Psoas muscle (tissue), 8 donors: ENCODE measurements at regions of chr10 and their contacts with region 1.

Region 1: GRCh38 chr10:71278691-71279588 is 40.1 kb upstream of the SLC29A3 start:
- DNase-seq: no peak
- ATAC-seq: no peak
- H3K4me3 ChIP-seq: no peak overlapping the region
- H3K27ac ChIP-seq: no peak overlapping the region
- H3K4me1 ChIP-seq: peaks cover 7% of the 10 kb centered on the region
- H3K27me3 ChIP-seq: no peaks in the 10 kb centered on the region
- CTCF ChIP-seq: no peak

Region 2: GRCh38 chr10:70799124-70799523 is 479.8 kb before region 1 on chr10:
- intact Hi-C with region 1: no loop called
- DNase-seq: no peak
- ATAC-seq: no peak
- H3K4me3 ChIP-seq: no peak overlapping the region
- H3K27ac ChIP-seq: no peak overlapping the region
- H3K4me1 ChIP-seq: no peaks in the 10 kb centered on the region
- H3K27me3 ChIP-seq: no peaks in the 10 kb centered on the region
- CTCF ChIP-seq: no peak

Region 3: GRCh38 chr10:70903262-70903921 is 375.5 kb before region 1 on chr10:
- intact Hi-C with region 1: loop called (anchors 2 to 5 kb)
- DNase-seq: peak; percentile 57 to 77
- ATAC-seq: peak; percentile 57 to 82 (median 68)
- H3K4me3 ChIP-seq: no peak overlapping the region
- H3K27ac ChIP-seq: no peak overlapping the region
- H3K4me1 ChIP-seq: peaks cover 4% of the 10 kb centered on the region
- H3K27me3 ChIP-seq: peaks cover 0 to 3% (median 0%) of the 10 kb centered on the region in 3 donors
- CTCF ChIP-seq: peak; percentile 92

Region 4: GRCh38 chr10:71486484-71487114 is 207.7 kb after region 1 on chr10:
- intact Hi-C with region 1: no loop called
- DNase-seq: no peak
- ATAC-seq: peak in 2 of 4 donors; percentile 46 to 54
- H3K4me3 ChIP-seq: no peak overlapping the region
- H3K27ac ChIP-seq: no peak overlapping the region
- H3K4me1 ChIP-seq: no peaks in the 10 kb centered on the region
- H3K27me3 ChIP-seq: no peaks in the 10 kb centered on the region
- CTCF ChIP-seq: peak; percentile 37

Region 5: DNA sequence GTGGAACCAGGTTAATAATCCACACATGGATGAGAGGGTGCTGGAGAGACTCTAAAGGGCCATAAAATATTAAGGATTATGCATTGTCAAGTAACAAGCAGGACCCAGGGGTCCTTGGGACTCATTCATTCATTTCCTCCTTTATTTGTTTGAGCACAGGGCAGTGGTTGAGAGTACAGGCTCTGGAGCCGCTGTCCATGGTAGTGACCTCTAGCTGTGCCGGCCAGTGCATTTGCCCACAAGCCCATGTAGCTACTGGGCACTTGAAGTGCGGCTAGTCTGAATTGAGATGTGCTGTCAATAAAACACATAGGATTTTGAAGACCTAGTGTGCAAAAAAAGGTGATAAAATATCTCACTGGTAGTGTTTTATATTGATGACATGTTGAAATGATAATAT is 303.1 kb after region 1 on chr10:
- intact Hi-C with region 1: no loop called
- DNase-seq: no peak
- ATAC-seq: no peak
- H3K4me3 ChIP-seq: no peak overlapping the region
- H3K27ac ChIP-seq: no peak overlapping the region
- H3K4me1 ChIP-seq: no peaks in the 10 kb centered on the region
- H3K27me3 ChIP-seq: peaks cover 0 to 4% (median 3%) of the 10 kb centered on the region in 3 donors
- CTCF ChIP-seq: no peak